ENCODE measurements at regions of chr15 and their contacts with region 1.

Region 1: DNA sequence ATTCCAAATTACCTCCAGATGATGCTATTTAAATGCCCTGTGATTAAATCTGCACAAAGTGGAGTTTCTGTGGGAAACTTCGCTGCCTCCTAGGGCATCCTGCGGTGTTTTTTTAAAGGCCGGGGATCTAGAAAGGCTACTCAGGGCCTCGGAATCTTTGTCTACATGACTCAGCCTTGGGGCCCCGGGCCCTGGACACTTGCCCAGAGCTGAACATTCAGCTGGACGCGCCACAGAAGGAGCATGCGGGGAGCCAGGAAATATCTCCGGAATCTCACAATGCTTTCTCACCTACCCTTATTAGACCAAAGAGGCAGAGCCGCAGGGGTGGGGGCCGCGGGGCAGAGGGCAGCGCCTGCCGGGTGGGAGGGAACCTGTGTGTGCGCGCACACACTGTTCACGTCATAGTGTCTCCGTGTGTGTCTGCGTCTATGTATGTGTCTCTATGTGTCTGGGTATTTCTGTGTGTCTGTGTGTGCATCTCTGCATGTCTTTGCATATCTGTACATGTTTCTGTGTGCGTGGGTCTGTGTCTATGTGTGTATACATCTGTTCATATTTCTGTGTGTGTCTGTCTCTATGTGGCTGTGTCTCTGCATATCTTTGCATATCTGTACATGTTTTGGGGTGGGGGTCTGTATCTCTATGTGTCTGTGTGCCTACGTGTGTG is 145.4 kb upstream of the TPM1 start:
- DNase-seq: peak; percentile 98
- H3K4me3 Mint-ChIP-seq: peak overlapping the region; percentile 57
- H3K27ac Mint-ChIP-seq: peak overlapping the region; percentile 97
- H3K4me1 Mint-ChIP-seq: peaks cover 74% of the 10 kb centered on the region
- H3K27me3 Mint-ChIP-seq: no peaks in the 10 kb centered on the region
- CTCF ChIP-seq: no peak

Region 2: DNA sequence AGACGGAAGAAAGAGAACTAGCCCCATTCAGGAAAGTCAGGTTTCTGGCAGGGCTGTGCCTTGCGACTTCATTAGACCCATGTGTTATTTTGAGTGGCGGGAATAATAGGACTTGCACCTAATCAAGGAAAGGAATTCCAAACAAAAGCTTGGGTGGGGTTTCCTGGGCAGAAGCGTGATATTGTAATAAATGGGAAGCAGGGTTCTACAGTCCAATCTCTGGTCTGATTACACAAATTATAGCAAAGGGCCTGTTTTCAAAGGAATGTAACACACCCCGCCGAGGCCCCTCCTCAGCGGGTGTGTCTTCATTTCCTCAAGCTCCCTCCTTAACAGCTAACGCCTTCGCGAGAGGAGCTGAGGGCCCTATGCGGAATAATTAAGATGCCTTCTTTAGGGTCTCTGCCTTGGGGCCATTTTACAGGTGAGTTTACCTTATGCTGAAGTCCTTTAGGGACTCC is 336.0 kb before region 1 on chr15:
- CTCF ChIA-PET with region 1: no interaction called
- intact Hi-C with region 1: no loop called
- DNase-seq: peak; percentile 27
- H3K4me3 Mint-ChIP-seq: no peak overlapping the region
- H3K27ac Mint-ChIP-seq: no peak overlapping the region
- H3K4me1 Mint-ChIP-seq: peaks cover 16% of the 10 kb centered on the region
- H3K27me3 Mint-ChIP-seq: peaks cover 59% of the 10 kb centered on the region
- CTCF ChIP-seq: no peak

Region 3: DNA sequence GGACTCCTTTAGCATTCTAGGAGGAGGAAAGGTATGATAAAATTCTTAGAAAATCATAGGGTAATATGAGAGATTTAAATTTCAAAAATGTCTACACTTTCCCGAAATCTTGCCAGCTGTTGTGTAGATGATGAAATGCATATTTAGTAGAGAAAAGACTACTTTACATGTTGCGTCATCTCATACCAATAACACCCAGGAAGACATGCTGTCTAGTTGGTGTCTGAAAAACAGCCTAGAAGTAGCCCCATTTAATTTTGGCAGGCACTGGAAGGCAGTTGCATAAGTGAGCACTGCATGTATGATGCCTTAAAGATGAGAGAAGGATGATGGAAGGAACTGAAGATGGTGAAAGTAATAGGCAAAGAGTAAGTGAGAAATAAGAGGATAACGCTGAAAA is 165.0 kb before region 1 on chr15:
- CTCF ChIA-PET with region 1: no interaction called
- intact Hi-C with region 1: no loop called
- DNase-seq: no peak
- H3K4me3 Mint-ChIP-seq: no peak overlapping the region
- H3K27ac Mint-ChIP-seq: no peak overlapping the region
- H3K4me1 Mint-ChIP-seq: no peaks in the 10 kb centered on the region
- H3K27me3 Mint-ChIP-seq: no peaks in the 10 kb centered on the region
- CTCF ChIP-seq: no peak

Region 4: GRCh38 chr15:62821384-62822131 is 75.6 kb before region 1 on chr15:
- CTCF ChIA-PET with region 1: interaction called, 5 read pairs
- intact Hi-C with region 1: loop called (anchors 2 kb)
- DNase-seq: peak; percentile 68
- H3K4me3 Mint-ChIP-seq: peak overlapping the region; percentile 46
- H3K27ac Mint-ChIP-seq: peak overlapping the region; percentile 98
- H3K4me1 Mint-ChIP-seq: peaks cover 76% of the 10 kb centered on the region
- H3K27me3 Mint-ChIP-seq: no peaks in the 10 kb centered on the region
- CTCF ChIP-seq: no peak

Region 5: DNA sequence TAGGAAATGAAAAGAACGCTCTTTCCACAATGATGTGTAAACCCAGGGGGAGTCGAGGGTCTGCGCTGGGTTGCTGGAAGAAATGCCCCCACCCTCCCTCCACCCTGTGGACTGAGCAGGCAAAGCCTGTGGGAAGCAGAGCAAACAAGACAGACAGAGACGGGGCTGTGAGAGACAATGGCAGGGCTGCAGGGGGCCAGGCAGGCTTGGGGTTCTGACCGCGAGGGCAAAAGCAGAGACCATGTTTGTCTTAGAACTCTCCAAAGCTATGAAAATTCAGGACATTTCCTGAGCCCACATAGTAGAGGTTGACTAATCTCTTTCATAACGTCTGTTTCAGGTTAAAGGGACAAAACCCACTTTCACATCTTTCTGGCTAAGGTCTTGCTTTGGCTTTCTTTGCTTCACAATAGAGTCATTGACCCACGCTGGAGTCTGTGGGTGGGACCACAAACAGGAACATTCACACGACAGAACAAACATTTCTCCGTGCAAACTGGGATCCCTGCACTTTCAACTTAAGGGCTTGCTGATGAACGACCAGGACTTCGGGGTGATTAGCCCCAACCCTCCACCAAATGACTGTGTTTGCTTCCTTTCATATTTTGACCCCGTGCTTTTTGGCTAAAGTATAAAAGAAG is 10.6 kb before region 1 on chr15:
- CTCF ChIA-PET with region 1: interaction called, 12 read pairs
- intact Hi-C with region 1: no loop called
- DNase-seq: peak; percentile 59
- H3K4me3 Mint-ChIP-seq: peak overlapping the region; percentile 57
- H3K27ac Mint-ChIP-seq: peak overlapping the region; percentile 92
- H3K4me1 Mint-ChIP-seq: peaks cover 61% of the 10 kb centered on the region
- H3K27me3 Mint-ChIP-seq: no peaks in the 10 kb centered on the region
- CTCF ChIP-seq: no peak

Region 6: DNA sequence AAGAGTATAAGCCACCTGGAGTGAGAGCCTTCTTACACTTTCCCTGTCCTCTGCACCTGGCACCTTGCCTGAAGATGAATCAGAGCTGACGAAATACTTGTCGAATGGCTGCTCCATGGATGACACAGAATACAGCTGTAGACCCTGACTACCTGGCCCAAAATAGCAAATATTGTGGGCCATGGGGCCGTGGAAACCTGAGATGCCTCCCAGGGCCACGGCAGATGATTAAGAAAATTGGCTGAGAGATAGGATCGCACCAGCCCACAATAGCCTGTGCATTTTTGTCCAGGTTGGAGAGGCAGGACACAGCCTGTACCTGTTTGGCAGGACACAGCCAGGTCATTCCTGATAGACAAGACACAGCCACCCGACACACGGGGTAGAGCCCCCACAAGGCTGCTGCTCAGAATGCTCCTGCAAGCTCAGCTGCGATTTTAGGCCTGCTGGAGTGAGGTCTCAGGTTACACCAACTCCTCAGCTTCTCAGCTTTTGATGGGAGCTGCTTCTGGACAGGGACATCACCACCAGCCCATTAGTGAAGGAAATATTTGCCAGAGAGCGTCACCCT is 122.5 kb after region 1 on chr15:
- CTCF ChIA-PET with region 1: interaction called, 4 read pairs
- intact Hi-C with region 1: loop called (anchors 5 kb)
- DNase-seq: peak; percentile 88
- H3K4me3 Mint-ChIP-seq: peak overlapping the region; percentile 41
- H3K27ac Mint-ChIP-seq: peak overlapping the region; percentile 92
- H3K4me1 Mint-ChIP-seq: peaks cover 65% of the 10 kb centered on the region
- H3K27me3 Mint-ChIP-seq: no peaks in the 10 kb centered on the region
- CTCF ChIP-seq: no peak

Measured in Calu3 (cell line).